ENCODE measurements at regions of chr2 and their contacts with region 1.

Region 1: DNA sequence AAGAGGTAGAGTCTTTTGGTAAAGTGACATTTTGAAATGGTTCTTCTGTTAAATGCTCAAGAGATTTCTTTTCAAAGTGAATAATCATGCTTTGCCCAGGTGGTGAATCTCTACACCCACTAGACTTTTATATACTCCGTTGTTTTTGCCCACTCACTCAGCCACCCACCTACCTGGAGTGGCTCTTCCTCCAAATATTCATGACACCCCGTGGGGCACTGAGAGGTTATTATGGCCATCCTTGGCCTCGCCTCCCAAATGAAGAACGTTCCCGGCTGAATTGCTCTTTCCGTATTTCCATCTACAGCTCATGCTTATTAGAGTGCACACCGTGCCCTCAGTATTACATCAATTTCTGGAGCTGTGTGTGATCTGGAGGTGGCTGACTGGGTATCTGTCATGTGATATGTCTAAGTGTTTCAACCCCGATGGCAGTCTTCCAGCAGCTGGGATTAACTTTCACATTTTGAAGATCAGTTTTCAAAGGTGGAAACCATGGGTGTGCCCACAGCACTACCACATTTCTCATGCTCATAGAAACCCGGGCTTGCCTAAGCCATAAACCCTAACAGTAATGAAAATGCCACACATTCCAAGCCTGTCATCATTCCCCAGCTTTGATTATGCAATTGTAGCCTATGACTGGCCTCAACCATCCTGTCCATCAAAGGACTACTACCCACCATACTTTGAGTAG is 406.6 kb upstream of the MMADHC start:
- DNase-seq: peak; percentile 43
- ATAC-seq: peak; percentile 71
- H3K4me3 ChIP-seq: no peak overlapping the region
- H3K27ac ChIP-seq: no peak overlapping the region
- H3K4me1 ChIP-seq: peaks cover 12% of the 10 kb centered on the region
- H3K27me3 ChIP-seq: no peaks in the 10 kb centered on the region
- CTCF ChIP-seq: no peak
- POLR2A ChIP-seq: no peak
- RAD21 ChIP-seq: no peak

Region 2: GRCh38 chr2:149648282-149649030 is 345.7 kb before region 1 on chr2:
- CTCF ChIA-PET with region 1: no interaction called
- POLR2A ChIA-PET with region 1: no interaction called
- dilution Hi-C with region 1: no loop called
- in situ Hi-C with region 1: no loop called
- intact Hi-C with region 1: no loop called
- DNase-seq: peak; percentile 99
- ATAC-seq: peak; percentile 96
- H3K4me3 ChIP-seq: no peak overlapping the region
- H3K27ac ChIP-seq: peak overlapping the region; percentile 52; the same call in 1 of the 2 replicates
- H3K4me1 ChIP-seq: peaks cover 8% of the 10 kb centered on the region
- H3K27me3 ChIP-seq: no peaks in the 10 kb centered on the region
- CTCF ChIP-seq: 0 out of 2 replicates have a peak, but pooled peaks have one; percentile 18
- POLR2A ChIP-seq: no peak
- RAD21 ChIP-seq: no peak

Region 3: DNA sequence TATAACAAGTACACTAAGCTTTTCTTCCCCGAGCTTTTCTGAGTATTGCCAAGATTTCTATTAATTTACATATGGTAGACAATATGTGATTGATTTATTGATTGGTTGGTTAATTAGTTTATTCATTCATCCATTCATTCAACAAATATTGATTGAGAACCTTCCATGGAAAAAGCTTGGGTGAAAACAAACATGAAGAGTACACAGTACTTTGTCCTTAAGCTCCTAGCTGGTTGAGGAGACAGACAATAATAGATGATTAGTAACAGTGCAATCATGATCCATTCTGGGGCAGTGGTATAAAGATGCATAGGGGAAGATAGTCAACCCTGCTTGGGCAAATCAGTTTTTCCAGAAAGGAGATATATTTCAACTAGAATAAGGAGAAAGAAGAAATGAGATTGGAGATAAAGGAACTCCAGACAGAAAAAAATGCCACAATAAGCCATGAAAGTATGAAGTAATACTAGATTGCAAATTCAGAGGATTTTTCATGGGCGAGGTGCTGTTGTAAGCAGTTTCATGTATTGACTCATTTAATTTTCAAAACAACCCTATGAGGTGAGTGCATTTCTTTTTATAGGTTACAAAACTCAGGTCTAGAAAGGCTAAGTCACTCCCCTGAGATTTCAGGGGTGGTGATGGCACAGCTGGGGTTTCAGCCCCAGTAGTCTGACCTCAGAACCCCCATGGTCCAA is 363.7 kb after region 1 on chr2:
- CTCF ChIA-PET with region 1: no interaction called
- POLR2A ChIA-PET with region 1: no interaction called
- dilution Hi-C with region 1: no loop called
- in situ Hi-C with region 1: no loop called
- intact Hi-C with region 1: loop called (anchors 10 kb)
- DNase-seq: peak; percentile 15
- ATAC-seq: no peak
- H3K4me3 ChIP-seq: no peak overlapping the region
- H3K27ac ChIP-seq: no peak overlapping the region
- H3K4me1 ChIP-seq: no peaks in the 10 kb centered on the region
- H3K27me3 ChIP-seq: no peaks in the 10 kb centered on the region
- CTCF ChIP-seq: no peak
- POLR2A ChIP-seq: no peak
- RAD21 ChIP-seq: no peak

Measured in IMR-90 (cell line).